GM12878 (cell line): ENCODE measurements at regions of chr9 and their contacts with region 1.

Region 1: GRCh38 chr9:136849038-136849959 is at the start of gene PHPT1:
- DNase-seq: peak; percentile 92
- ATAC-seq: peak; percentile 91
- H3K4me3 ChIP-seq: peak within 1 kb of the TSS; percentile 80
- H3K27ac ChIP-seq: peak within 1 kb of the TSS; percentile 81
- H3K4me1 ChIP-seq: peaks cover 7% of the 10 kb centered on the region
- H3K27me3 ChIP-seq: no peaks in the 10 kb centered on the region; a peak in 1 of 4 replicates
- CTCF ChIP-seq: no peak
- EP300 ChIP-seq: no peak
- POLR2A ChIP-seq: peak; percentile 92
- RAD21 ChIP-seq: no peak
- polyA plus RNA-seq, gene PHPT1: 169 to 200 TPM

Region 2: GRCh38 chr9:136587145-136587943 is 262.0 kb before region 1 on chr9:
- CTCF ChIA-PET with region 1: no interaction called
- POLR2A ChIA-PET with region 1: no interaction called
- RAD21 ChIA-PET with region 1: no interaction called
- SMC1A ChIA-PET with region 1: no interaction called
- in situ Hi-C with region 1: no loop called
- intact Hi-C with region 1: no loop called
- DNase-seq: no peak
- ATAC-seq: peak; percentile 33
- H3K4me3 ChIP-seq: no peak overlapping the region
- H3K27ac ChIP-seq: no peak overlapping the region
- H3K4me1 ChIP-seq: peaks cover 14% of the 10 kb centered on the region
- H3K27me3 ChIP-seq: no peaks in the 10 kb centered on the region; a peak in 1 of 4 replicates
- CTCF ChIP-seq: no peak
- EP300 ChIP-seq: no peak
- POLR2A ChIP-seq: no peak
- RAD21 ChIP-seq: no peak

Region 3: DNA sequence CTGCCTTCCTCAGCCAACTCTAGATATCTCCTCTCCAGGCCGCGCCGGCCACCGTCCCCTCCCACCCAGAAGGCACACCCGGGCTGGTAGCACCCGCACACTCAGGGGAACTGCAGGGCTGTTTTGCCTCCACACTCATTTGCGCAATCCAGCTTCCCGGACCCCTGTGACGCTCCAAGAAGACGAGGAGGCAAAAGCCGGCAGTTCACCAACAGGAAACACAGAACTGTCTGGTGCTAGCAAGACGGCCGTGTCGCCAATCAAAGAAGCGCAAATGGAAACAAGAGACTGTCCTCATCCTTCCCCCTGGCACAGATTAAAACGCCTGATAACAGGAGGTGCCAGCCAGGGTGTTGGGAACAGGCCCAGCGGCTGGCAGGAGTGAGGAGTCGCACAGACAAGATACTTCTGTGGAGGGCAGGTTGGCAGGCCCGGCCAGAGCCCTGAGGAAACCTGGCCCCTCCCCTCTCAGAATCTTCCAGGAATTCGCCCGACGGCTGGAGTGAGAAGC is 169.8 kb before region 1 on chr9:
- CTCF ChIA-PET with region 1: no interaction called
- POLR2A ChIA-PET with region 1: no interaction called
- RAD21 ChIA-PET with region 1: no interaction called
- SMC1A ChIA-PET with region 1: no interaction called
- in situ Hi-C with region 1: no loop called
- intact Hi-C with region 1: no loop called
- DNase-seq: no peak
- ATAC-seq: no peak
- H3K4me3 ChIP-seq: no peak overlapping the region
- H3K27ac ChIP-seq: no peak overlapping the region
- H3K4me1 ChIP-seq: no peaks in the 10 kb centered on the region
- H3K27me3 ChIP-seq: no peaks in the 10 kb centered on the region
- CTCF ChIP-seq: no peak
- EP300 ChIP-seq: no peak
- POLR2A ChIP-seq: no peak
- RAD21 ChIP-seq: no peak

Region 4: GRCh38 chr9:136773386-136774044 is 75.8 kb before region 1 on chr9:
- CTCF ChIA-PET with region 1: no interaction called
- POLR2A ChIA-PET with region 1: no interaction called
- RAD21 ChIA-PET with region 1: no interaction called
- SMC1A ChIA-PET with region 1: no interaction called
- in situ Hi-C with region 1: no loop called
- intact Hi-C with region 1: no loop called
- DNase-seq: no peak
- ATAC-seq: peak; percentile 92
- H3K4me3 ChIP-seq: no peak overlapping the region
- H3K27ac ChIP-seq: no peak overlapping the region
- H3K4me1 ChIP-seq: no peaks in the 10 kb centered on the region
- H3K27me3 ChIP-seq: no peaks in the 10 kb centered on the region; a peak in 1 of 4 replicates
- CTCF ChIP-seq: no peak
- EP300 ChIP-seq: no peak
- POLR2A ChIP-seq: no peak
- RAD21 ChIP-seq: no peak

Region 5: GRCh38 chr9:136835162-136835931 is 14.0 kb before region 1 on chr9:
- CTCF ChIA-PET with region 1: no interaction called
- POLR2A ChIA-PET with region 1: no interaction called
- RAD21 ChIA-PET with region 1: no interaction called
- SMC1A ChIA-PET with region 1: no interaction called
- in situ Hi-C with region 1: no loop called
- intact Hi-C with region 1: no loop called
- DNase-seq: no peak
- ATAC-seq: no peak
- H3K4me3 ChIP-seq: no peak overlapping the region
- H3K27ac ChIP-seq: no peak overlapping the region
- H3K4me1 ChIP-seq: no peaks in the 10 kb centered on the region
- H3K27me3 ChIP-seq: no peaks in the 10 kb centered on the region
- CTCF ChIP-seq: no peak
- EP300 ChIP-seq: no peak
- POLR2A ChIP-seq: peak; percentile 57; the same call in 1 of the 2 replicates
- RAD21 ChIP-seq: no peak

Region 6: DNA sequence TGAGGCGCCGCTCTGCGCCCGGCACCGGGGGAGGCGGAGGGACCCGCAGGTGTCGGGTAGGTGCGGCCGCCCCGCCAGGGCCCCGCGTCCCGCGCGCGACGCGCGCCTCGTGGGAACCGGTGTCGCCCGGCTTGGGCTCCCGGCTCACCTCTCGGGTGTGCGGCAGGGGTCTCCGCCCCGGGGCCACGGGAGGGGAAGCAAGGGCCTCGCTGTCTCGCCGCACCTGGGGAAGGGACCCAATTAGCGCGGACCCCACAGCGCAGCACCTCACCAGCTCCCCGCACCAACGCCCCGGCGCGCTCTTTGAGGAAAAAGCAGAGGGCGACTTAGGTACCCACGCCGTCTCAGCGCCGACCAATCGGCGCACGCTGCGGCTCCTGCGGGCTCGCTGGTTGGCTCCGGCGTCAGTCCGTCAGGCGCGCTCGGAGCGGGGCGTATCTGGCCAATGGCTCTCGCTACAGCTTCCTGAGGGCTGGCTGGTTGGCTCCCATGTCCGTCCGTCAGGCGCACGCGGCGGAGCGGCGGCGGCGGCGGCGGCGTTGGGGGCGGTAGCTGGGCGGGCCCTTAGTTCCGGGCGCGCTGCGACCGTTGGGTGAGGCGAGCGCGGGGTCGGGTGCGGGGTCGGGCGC is 36.8 kb after region 1 on chr9 and contains the start of gene TRAF2:
- CTCF ChIA-PET with region 1: interaction called, 46 read pairs
- POLR2A ChIA-PET with region 1: interaction called, 9 read pairs
- RAD21 ChIA-PET with region 1: interaction called, 7 read pairs
- SMC1A ChIA-PET with region 1: no interaction called
- in situ Hi-C with region 1: no loop called
- intact Hi-C with region 1: loop called (anchors 5 kb)
- DNase-seq: peak; percentile 98
- ATAC-seq: peak; percentile 92
- H3K4me3 ChIP-seq: peak within 1 kb of the TSS; percentile 100
- H3K27ac ChIP-seq: peak within 1 kb of the TSS; percentile 98
- H3K4me1 ChIP-seq: peaks cover 33% of the 10 kb centered on the region
- H3K27me3 ChIP-seq: no peaks in the 10 kb centered on the region
- CTCF ChIP-seq: 0 out of 6 replicates have a peak, but pooled peaks of 1 of the 3 experiments have one; percentile 3
- EP300 ChIP-seq: no peak
- POLR2A ChIP-seq: peak; percentile 90
- RAD21 ChIP-seq: no peak
- polyA plus RNA-seq, gene TRAF2: 0.34 to 1.1 TPM

Region 7: DNA sequence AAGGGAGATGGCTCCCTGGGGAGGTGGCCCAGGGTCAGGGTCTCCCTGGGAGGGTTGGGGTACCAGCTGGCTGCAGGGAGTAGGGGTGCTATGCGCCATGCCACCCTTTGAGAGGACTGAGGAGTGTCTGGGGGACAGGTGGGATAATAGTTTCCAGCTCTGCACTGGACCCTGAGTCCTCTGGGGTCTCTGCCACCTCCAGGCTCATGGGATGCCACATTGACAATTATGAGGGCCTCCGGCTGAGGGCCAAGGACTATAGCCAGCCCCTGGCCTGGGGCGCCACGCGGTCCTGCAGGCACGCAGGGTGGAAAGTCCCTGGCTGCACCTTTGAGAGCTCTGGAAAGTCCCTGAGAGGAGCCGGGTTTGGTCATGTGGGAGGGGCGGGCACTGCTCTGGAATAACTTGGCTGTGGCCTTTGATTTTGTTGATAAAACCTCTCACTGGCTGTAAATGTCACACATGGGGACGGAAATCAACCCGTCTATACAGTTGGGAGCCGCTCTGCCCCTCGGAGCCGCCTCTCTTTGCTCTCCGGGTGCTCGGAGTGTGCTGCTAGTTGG is 53.0 kb after region 1 on chr9:
- CTCF ChIA-PET with region 1: interaction called, 4 read pairs
- POLR2A ChIA-PET with region 1: no interaction called
- RAD21 ChIA-PET with region 1: interaction called, 16 read pairs
- SMC1A ChIA-PET with region 1: interaction called, 6 read pairs
- in situ Hi-C with region 1: no loop called
- intact Hi-C with region 1: no loop called
- DNase-seq: peak; percentile 66
- ATAC-seq: peak; percentile 90
- H3K4me3 ChIP-seq: peak overlapping the region; percentile 24; the same call in 1 of the 2 replicates
- H3K27ac ChIP-seq: peak overlapping the region; percentile 99
- H3K4me1 ChIP-seq: peaks cover 59% of the 10 kb centered on the region
- H3K27me3 ChIP-seq: no peaks in the 10 kb centered on the region
- CTCF ChIP-seq: no peak
- EP300 ChIP-seq: peak; percentile 73 to 76; a peak in 3 of 4 replicates
- POLR2A ChIP-seq: peak; percentile 52
- RAD21 ChIP-seq: no peak

Region 8: DNA sequence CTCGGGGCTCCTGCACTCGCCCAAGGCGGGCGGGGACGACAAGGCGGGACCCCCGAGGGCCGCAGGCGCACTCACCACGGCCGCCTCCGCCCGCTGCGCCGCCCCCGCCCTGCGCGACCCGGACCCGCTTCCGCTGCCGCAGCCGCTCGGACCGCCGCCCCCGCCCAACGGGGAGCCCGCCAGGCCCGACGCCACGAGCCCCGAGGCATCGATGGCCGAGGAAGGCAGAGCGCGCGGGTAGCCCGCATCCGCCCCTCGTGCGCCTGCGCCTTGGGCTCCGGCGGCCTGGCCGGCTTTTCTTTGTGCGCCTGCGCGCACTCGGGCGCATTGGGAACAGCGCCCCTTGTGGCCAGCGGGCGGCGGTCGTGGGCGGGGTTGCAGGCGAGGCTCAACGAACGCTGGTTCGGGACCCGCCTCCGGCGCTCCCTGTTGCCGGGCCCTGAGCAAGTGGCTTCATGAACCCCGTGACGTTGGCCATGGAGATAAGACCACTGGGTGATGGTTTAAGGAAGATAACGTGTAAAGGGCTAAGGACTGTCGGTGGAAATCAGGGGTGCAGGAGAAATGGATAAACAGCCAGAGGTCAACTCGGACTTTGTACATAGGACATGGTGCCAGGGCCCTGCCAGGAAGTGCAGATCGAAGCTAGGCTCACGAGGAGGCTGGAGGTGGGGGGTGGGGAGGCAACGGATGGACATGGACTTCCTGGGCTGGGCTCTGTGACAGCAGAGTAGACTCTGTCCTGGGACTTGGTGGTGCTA is 95.4 kb after region 1 on chr9 and contains the starts of genes C8G and FBXW5:
- CTCF ChIA-PET with region 1: interaction called, 12 read pairs
- POLR2A ChIA-PET with region 1: interaction called, 5 read pairs
- RAD21 ChIA-PET with region 1: no interaction called
- SMC1A ChIA-PET with region 1: no interaction called
- in situ Hi-C with region 1: no loop called
- intact Hi-C with region 1: loop called (anchors 5 kb)
- DNase-seq: peak; percentile 72
- ATAC-seq: peak; percentile 78
- H3K4me3 ChIP-seq: peak within 1 kb of the TSS; percentile 98
- H3K27ac ChIP-seq: peak within 1 kb of the TSS; percentile 91
- H3K4me1 ChIP-seq: peaks cover 4% of the 10 kb centered on the region
- H3K27me3 ChIP-seq: no peaks in the 10 kb centered on the region
- CTCF ChIP-seq: peak; percentile 95 to 98 (median 98); a peak in 5 of 6 replicates
- EP300 ChIP-seq: 0 out of 4 replicates have a peak, but pooled peaks of 1 of the 2 experiments have one; percentile 35
- POLR2A ChIP-seq: no peak
- RAD21 ChIP-seq: peak; percentile 35; the same call in 1 of the 2 replicates
- polyA plus RNA-seq, gene C8G: not detected
- polyA plus RNA-seq, gene FBXW5: 0.21 to 1.4 TPM